GM12878 (cell line): ENCODE measurements at regions of chr1 and their contacts with region 1.

Region 1: GRCh38 chr1:42952303-42953001 is 6.2 kb downstream of the SLC2A1 start:
- DNase-seq: no peak
- ATAC-seq: peak; percentile 67
- H3K4me3 ChIP-seq: peak overlapping the region; percentile 88
- H3K27ac ChIP-seq: peak overlapping the region; percentile 62
- H3K4me1 ChIP-seq: peaks cover 59% of the 10 kb centered on the region
- H3K27me3 ChIP-seq: no peaks in the 10 kb centered on the region
- CTCF ChIP-seq: no peak
- EP300 ChIP-seq: 0 out of 4 replicates have a peak, but pooled peaks of 1 of the 2 experiments have one; percentile 8
- POLR2A ChIP-seq: 0 out of 2 replicates have a peak, but pooled peaks have one; percentile 16
- RAD21 ChIP-seq: no peak

Region 2: DNA sequence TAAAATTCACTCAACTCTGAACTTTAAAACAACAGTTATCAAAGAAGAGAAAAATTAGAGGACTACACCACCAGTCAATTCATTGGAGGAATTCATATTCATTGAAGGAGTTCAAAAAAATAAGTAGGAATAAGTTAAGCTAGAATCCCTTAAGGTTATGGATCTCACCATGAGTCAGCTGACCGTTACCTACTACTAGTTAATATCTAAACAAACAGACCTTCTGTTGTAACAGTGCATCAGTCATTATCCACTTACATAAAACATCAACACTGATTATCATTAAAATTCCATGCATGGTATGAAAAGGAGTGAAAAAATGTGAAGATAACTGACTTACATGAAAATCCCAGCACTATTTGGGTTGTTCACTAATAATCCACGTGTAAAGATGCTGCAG is 662.3 kb before region 1 on chr1:
- CTCF ChIA-PET with region 1: no interaction called
- POLR2A ChIA-PET with region 1: interaction called, 10 read pairs
- RAD21 ChIA-PET with region 1: no interaction called
- SMC1A ChIA-PET with region 1: no interaction called
- in situ Hi-C with region 1: no loop called
- intact Hi-C with region 1: no loop called
- DNase-seq: no peak
- ATAC-seq: no peak
- H3K4me3 ChIP-seq: no peak overlapping the region
- H3K27ac ChIP-seq: no peak overlapping the region
- H3K4me1 ChIP-seq: no peaks in the 10 kb centered on the region
- H3K27me3 ChIP-seq: no peaks in the 10 kb centered on the region
- CTCF ChIP-seq: no peak
- EP300 ChIP-seq: no peak
- POLR2A ChIP-seq: no peak
- RAD21 ChIP-seq: no peak

Region 3: GRCh38 chr1:42904434-42904833 is 48.0 kb before region 1 on chr1:
- CTCF ChIA-PET with region 1: no interaction called
- POLR2A ChIA-PET with region 1: no interaction called
- RAD21 ChIA-PET with region 1: no interaction called
- SMC1A ChIA-PET with region 1: no interaction called
- in situ Hi-C with region 1: no loop called
- intact Hi-C with region 1: no loop called
- DNase-seq: no peak
- ATAC-seq: no peak
- H3K4me3 ChIP-seq: no peak overlapping the region
- H3K27ac ChIP-seq: no peak overlapping the region
- H3K4me1 ChIP-seq: no peaks in the 10 kb centered on the region
- H3K27me3 ChIP-seq: no peaks in the 10 kb centered on the region
- CTCF ChIP-seq: no peak
- EP300 ChIP-seq: no peak
- POLR2A ChIP-seq: no peak
- RAD21 ChIP-seq: no peak

Region 4: GRCh38 chr1:42931108-42931539 is 21.3 kb before region 1 on chr1:
- CTCF ChIA-PET with region 1: interaction called, 57 read pairs
- POLR2A ChIA-PET with region 1: interaction called, 22 read pairs
- RAD21 ChIA-PET with region 1: interaction called, 21 read pairs
- SMC1A ChIA-PET with region 1: interaction called, 71 read pairs
- in situ Hi-C with region 1: no loop called
- intact Hi-C with region 1: no loop called
- DNase-seq: peak; percentile 69
- ATAC-seq: peak; percentile 61
- H3K4me3 ChIP-seq: 0 out of 2 replicates have a peak overlapping the region, but pooled peaks have one; percentile 17
- H3K27ac ChIP-seq: peak overlapping the region; percentile 95
- H3K4me1 ChIP-seq: peaks cover 63% of the 10 kb centered on the region
- H3K27me3 ChIP-seq: no peaks in the 10 kb centered on the region
- CTCF ChIP-seq: peak; percentile 53 to 65 (median 65)
- EP300 ChIP-seq: peak in 1 of 2 experiments; percentile 36; a peak in 1 of 4 replicates
- POLR2A ChIP-seq: no peak
- RAD21 ChIP-seq: peak; percentile 60

Region 5: GRCh38 chr1:42936309-42937078 is 16.0 kb before region 1 on chr1:
- CTCF ChIA-PET with region 1: interaction called, 57 read pairs
- POLR2A ChIA-PET with region 1: interaction called, 22 read pairs
- RAD21 ChIA-PET with region 1: interaction called, 21 read pairs
- SMC1A ChIA-PET with region 1: interaction called, 71 read pairs
- in situ Hi-C with region 1: no loop called
- intact Hi-C with region 1: no loop called
- DNase-seq: no peak
- ATAC-seq: no peak
- H3K4me3 ChIP-seq: no peak overlapping the region
- H3K27ac ChIP-seq: peak overlapping the region; percentile 38
- H3K4me1 ChIP-seq: peaks cover 92% of the 10 kb centered on the region
- H3K27me3 ChIP-seq: no peaks in the 10 kb centered on the region
- CTCF ChIP-seq: no peak
- EP300 ChIP-seq: no peak
- POLR2A ChIP-seq: no peak
- RAD21 ChIP-seq: no peak

Region 6: DNA sequence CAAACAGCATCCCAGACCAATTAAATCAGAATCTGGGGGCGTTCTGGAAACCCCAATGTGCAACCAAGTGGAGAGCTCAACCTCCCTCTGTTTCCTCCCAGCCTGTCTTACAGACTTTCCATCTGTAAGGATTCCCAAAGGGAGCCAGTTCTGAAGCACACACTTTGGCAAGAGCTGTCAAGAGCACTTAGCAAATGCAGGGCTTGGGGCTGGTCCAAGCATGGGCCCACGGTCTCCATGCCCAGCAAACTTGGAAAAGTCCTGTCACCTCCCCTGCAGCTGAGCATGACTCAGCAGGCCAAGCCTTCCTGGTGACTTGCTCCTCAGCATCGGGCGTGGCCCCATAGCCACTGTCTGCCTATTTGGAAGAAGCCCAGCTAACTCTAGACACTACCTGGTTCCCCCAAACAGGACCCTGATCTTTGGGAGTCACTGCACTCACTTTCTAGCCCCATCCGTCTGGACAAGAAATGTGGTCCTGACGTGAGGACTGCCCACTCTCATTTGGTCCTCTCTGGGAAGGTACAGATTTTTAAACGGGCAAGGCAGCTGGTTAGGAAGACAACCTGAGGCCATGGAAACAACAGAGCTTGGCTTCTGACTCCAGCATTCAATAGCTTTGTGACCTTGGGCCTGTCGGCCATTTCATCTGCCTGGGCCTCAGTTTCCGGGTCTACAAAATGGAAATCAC is 10.7 kb before region 1 on chr1:
- CTCF ChIA-PET with region 1: interaction called, 57 read pairs
- POLR2A ChIA-PET with region 1: interaction called, 22 read pairs
- RAD21 ChIA-PET with region 1: interaction called, 11 read pairs
- SMC1A ChIA-PET with region 1: interaction called, 71 read pairs
- in situ Hi-C with region 1: no loop called
- intact Hi-C with region 1: no loop called
- DNase-seq: no peak
- ATAC-seq: no peak
- H3K4me3 ChIP-seq: no peak overlapping the region
- H3K27ac ChIP-seq: peak overlapping the region; percentile 74
- H3K4me1 ChIP-seq: peaks cover 92% of the 10 kb centered on the region
- H3K27me3 ChIP-seq: no peaks in the 10 kb centered on the region
- CTCF ChIP-seq: no peak
- EP300 ChIP-seq: no peak
- POLR2A ChIP-seq: no peak
- RAD21 ChIP-seq: no peak